ENCODE measurements at regions of chr2 and their contacts with region 1.

Region 1: GRCh38 chr2:43426305-43427031 is 169.4 kb downstream of the THADA start:
- DNase-seq: peak; percentile 77
- ATAC-seq: peak; percentile 98
- H3K4me3 ChIP-seq: no peak overlapping the region
- H3K4me3 Mint-ChIP-seq: peak overlapping the region; percentile 74
- H3K27ac ChIP-seq: peak overlapping the region; percentile 20 to 25
- H3K27ac Mint-ChIP-seq: peak overlapping the region; percentile 83
- H3K4me1 ChIP-seq: peaks cover 25 to 28% of the 10 kb centered on the region in 2 donors
- H3K4me1 Mint-ChIP-seq: peaks cover 33% of the 10 kb centered on the region
- H3K27me3 ChIP-seq: no peaks in the 10 kb centered on the region
- H3K27me3 Mint-ChIP-seq: no peaks in the 10 kb centered on the region
- CTCF ChIP-seq: no peak

Region 2: GRCh38 chr2:43408407-43409160 is 17.9 kb before region 1 on chr2:
- CTCF ChIA-PET with region 1: interaction called, 4 read pairs
- POLR2A ChIA-PET with region 1: no interaction called
- intact Hi-C with region 1: loop called (anchors 2 kb)
- DNase-seq: peak; percentile 68
- ATAC-seq: peak; percentile 93
- H3K4me3 ChIP-seq: no peak overlapping the region
- H3K4me3 Mint-ChIP-seq: peak overlapping the region; percentile 27
- H3K27ac ChIP-seq: peak overlapping the region; percentile 8 to 28
- H3K27ac Mint-ChIP-seq: peak overlapping the region; percentile 41
- H3K4me1 ChIP-seq: peaks cover 13 to 25% of the 10 kb centered on the region in 2 donors
- H3K4me1 Mint-ChIP-seq: peaks cover 26% of the 10 kb centered on the region
- H3K27me3 ChIP-seq: no peaks in the 10 kb centered on the region
- H3K27me3 Mint-ChIP-seq: no peaks in the 10 kb centered on the region
- CTCF ChIP-seq: no peak

Region 3: DNA sequence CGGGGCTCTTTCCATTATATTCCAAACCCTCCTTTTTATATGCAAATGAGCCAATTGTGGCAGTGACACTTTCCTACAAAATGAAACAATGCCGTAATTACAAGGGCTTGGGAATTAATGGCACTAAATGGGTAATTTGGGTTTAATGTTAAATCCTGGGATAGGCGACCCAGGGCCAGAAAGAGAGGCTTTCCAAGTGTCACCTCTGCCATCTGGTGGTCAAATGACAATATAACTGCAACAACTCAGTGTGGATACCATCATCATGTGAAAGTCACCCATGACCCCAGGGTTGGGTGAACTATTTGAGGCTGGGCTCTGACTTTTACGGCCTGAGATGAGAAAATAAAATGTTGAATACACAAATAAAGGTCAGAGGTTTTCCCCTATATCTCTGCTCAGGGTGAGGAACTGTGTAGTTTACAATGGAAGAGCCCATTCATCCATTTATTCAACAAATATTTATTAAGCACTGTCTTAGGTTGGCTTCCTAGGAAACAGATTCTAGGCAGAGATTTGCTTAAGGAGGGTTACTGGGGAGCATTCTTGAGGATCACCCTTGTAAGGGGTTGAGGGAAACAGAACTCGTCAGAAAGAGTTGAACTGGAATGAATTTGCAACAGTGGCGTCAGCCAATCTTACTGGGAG is 182.9 kb after region 1 on chr2:
- CTCF ChIA-PET with region 1: no interaction called
- POLR2A ChIA-PET with region 1: no interaction called
- intact Hi-C with region 1: no loop called
- DNase-seq: peak; percentile 67
- ATAC-seq: peak; percentile 71
- H3K4me3 ChIP-seq: no peak overlapping the region
- H3K4me3 Mint-ChIP-seq: no peak overlapping the region
- H3K27ac ChIP-seq: no peak overlapping the region
- H3K27ac Mint-ChIP-seq: no peak overlapping the region
- H3K4me1 ChIP-seq: no peaks in the 10 kb centered on the region
- H3K4me1 Mint-ChIP-seq: no peaks in the 10 kb centered on the region
- H3K27me3 ChIP-seq: no peaks in the 10 kb centered on the region
- H3K27me3 Mint-ChIP-seq: no peaks in the 10 kb centered on the region
- CTCF ChIP-seq: peak; percentile 87

Measured in B cell (primary cell).